Brain microvascular endothelial cell (primary cell): ENCODE measurements at regions of chr1 and their contacts with region 1.

Region 1: DNA sequence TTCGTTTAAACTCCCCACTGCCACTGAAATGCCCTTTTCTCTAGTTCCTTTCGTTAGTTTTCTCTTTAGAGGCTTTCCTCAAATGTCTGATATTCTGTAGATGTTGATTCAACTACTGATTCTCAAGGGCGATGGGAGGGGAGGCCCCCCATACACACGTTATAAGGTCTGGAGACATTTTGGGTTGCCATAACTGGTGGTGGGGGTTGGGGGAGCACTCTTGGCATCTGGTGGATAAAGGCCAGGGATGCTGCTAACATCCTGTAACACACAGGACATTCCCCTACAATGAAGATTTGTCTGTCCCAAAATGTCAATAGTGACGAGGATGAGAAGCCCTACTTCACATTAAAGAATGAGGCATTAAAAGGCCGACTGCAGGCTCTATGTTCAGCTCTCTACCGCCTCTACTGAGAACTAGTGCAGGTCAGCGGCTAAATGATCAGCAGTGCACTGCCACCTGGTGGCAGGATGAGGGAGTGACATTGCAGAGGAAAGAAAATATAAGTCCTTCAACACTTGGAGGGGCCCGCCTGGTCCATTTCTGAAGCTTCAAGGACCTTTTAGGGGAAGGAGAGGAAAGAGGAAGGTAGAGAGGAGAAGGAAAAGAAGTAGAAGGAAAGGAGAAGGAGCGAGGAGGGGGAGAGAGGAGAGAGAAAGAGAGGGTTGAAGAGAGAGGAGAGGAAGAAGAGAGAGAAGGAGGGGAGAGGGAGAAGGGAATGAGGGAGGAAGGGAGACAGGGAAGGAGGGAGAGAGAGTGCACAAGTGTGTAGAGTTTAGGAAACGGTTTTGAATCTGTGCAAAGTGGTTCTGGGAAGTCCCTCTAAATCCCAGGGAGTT is 29.4 kb downstream of the ALG14 start:
- DNase-seq: peak; percentile 87
- H3K4me3 ChIP-seq: no peak overlapping the region
- H3K27ac ChIP-seq: no peak overlapping the region
- H3K27me3 ChIP-seq: no peaks in the 10 kb centered on the region
- CTCF ChIP-seq: peak; percentile 99

Region 2: GRCh38 chr1:94854458-94855306 is 188.7 kb before region 1 on chr1:
- in situ Hi-C with region 1: loop called (anchors 25 kb)
- DNase-seq: peak; percentile 89
- H3K4me3 ChIP-seq: peak overlapping the region; percentile 59
- H3K27ac ChIP-seq: peak overlapping the region; percentile 32
- H3K27me3 ChIP-seq: no peaks in the 10 kb centered on the region
- CTCF ChIP-seq: peak; percentile 96

Region 3: DNA sequence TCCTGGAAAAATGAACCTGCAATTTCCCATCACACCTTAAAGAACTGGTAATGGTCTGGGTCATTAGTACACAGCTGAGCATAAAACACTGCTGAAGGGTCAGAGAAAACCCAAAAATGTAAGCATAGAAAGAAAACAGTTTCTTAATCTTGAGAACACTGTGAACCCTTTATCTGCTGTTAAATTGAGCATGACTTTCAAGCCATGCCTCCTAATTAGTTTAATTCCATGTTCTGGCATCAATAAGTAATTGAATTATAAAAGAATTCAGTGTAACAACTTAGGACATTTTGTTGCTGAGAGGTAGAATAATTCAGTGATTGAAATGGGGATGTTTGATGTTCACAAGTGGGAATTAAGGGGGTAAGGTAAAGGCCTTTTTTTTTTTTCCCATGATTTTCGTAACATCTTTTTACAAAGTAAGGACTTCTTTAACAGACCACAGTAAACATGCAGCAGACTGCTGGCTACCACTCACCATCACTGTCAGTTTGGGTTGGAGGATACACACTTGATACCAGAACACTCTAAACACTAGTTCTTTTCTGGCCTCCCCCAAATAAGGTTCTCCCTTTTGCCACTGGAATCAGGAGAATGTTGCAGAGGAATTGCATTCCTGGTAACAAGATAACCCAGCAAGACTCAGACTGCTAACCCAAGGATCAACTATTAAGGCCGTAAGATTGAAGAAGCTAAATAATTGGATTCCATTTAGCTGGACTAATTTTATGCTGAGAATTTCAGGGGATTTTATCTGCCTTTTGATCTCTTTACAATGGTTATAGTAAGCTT is 193.6 kb after region 1 on chr1:
- in situ Hi-C with region 1: no loop called
- DNase-seq: no peak
- H3K4me3 ChIP-seq: no peak overlapping the region
- H3K27ac ChIP-seq: no peak overlapping the region
- H3K27me3 ChIP-seq: no peaks in the 10 kb centered on the region
- CTCF ChIP-seq: no peak